ENCODE measurements at regions of chr5 and their contacts with region 1.

Region 1: DNA sequence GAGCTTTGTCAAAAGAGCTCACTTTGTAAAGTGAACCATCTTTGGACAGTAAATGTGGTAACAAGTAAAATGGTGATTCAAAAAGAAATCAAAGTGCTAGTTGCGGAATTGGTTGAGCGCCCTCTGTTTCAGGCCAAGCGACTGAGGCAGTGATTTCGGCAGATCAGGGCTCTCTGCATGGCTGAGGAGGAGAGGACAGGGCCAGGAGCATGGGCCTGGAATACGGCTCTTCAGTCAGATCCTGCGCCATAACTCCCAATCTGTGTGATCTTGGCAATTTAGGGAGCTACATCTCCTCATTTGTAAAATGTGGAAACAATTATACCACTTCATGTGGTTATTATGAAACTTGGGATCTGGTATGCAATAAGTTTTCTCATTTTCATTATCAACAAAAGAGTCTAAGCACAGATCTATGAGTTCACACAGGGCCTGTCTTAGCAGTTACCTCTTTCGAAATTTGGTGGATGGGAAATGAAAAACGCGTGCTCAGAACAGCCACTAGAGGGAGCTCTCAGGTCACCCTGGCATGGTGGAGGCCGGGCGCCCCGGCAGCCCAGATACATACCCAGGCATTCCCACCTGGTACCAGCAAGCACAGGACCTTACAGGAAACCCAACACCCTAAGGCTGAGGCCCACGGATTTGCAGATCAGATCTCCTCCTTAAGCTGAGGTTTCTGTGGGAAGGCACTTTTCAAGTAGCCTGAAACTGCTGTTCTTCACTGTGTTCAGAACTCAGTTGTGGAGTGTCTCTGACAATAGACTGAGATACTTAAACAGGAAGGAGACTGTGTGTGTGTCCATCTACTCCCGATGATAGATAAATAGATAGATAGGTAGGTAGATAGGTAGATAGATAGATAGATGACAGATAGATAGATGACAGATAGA is 303.7 kb downstream of the RAB3C start:
- DNase-seq: peak; percentile 77
- ATAC-seq: peak; percentile 87
- H3K4me3 Mint-ChIP-seq: no peak overlapping the region
- H3K27ac Mint-ChIP-seq: peak overlapping the region; percentile 67
- H3K4me1 Mint-ChIP-seq: peaks cover 39% of the 10 kb centered on the region
- H3K27me3 Mint-ChIP-seq: peaks cover 15% of the 10 kb centered on the region

Region 2: GRCh38 chr5:57929271-57929670 is 957.3 kb before region 1 on chr5:
- CTCF ChIA-PET with region 1: no interaction called
- DNase-seq: no peak
- ATAC-seq: no peak
- H3K4me3 Mint-ChIP-seq: no peak overlapping the region
- H3K27ac Mint-ChIP-seq: no peak overlapping the region
- H3K4me1 Mint-ChIP-seq: no peaks in the 10 kb centered on the region
- H3K27me3 Mint-ChIP-seq: no peaks in the 10 kb centered on the region

Region 3: DNA sequence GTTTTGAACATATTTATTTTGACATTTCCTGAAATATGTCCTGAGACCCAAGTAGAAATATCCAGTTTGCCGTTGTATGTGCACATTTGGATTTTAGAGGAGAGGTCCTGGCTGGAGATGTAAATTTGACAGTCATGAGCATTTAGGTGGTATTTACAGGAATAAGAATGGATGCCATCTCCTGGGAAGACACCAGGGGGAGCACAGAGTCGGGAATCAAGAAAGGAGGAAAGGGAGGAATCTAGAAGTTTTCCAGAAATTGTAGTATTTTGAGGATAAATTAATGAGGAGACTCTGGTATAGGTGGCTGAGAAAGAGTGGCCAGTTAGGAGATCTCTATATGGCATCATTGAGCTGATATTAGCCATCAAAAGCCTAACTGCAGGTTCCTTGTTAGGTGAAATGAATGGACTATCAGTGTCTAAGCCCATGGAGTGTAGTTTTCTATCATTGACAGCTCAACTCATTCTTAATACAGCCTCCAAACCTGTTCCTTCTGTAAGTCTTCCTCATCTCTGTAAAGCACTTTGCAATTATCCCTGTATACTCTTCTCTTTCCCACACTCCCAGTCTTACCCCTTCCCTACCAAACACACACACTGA is 388.1 kb before region 1 on chr5:
- CTCF ChIA-PET with region 1: no interaction called
- DNase-seq: no peak
- ATAC-seq: no peak
- H3K4me3 Mint-ChIP-seq: no peak overlapping the region
- H3K27ac Mint-ChIP-seq: no peak overlapping the region
- H3K4me1 Mint-ChIP-seq: no peaks in the 10 kb centered on the region
- H3K27me3 Mint-ChIP-seq: peaks cover 9% of the 10 kb centered on the region

Region 4: GRCh38 chr5:58922461-58923171 is 36.1 kb after region 1 on chr5:
- CTCF ChIA-PET with region 1: no interaction called
- DNase-seq: no peak
- ATAC-seq: no peak
- H3K4me3 Mint-ChIP-seq: no peak overlapping the region
- H3K27ac Mint-ChIP-seq: no peak overlapping the region
- H3K4me1 Mint-ChIP-seq: peaks cover 23% of the 10 kb centered on the region
- H3K27me3 Mint-ChIP-seq: peaks cover 18% of the 10 kb centered on the region

Region 5: DNA sequence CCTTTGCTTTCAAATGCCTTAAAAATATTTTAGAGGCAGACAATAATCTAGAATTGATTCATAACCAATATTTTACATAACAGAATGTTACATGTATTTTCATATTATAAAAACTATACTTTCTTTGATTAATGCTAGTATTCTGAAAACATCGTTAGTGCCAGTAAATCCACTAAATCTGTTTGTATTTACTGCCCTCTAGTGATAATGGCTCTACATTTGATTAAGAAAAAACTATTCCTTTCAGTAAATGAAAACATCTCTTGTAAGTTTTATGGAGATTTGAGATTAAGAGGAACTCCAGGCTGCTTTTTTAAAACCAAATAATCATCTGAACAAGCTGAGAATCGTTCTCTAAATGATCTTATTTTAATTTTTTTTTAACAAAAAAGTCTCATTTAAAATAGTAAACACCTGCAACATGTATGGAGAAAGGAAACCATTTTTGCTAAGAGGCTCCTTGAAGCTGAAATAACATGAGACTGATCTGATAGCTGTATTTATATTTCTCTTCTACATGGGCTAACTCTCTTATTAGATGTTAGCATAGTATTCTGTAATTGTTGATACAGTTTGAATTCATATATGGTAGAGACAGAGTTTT is 121.0 kb after region 1 on chr5:
- CTCF ChIA-PET with region 1: interaction called, 17 read pairs
- DNase-seq: no peak
- ATAC-seq: no peak
- H3K4me3 Mint-ChIP-seq: no peak overlapping the region
- H3K27ac Mint-ChIP-seq: no peak overlapping the region
- H3K4me1 Mint-ChIP-seq: peaks cover 46% of the 10 kb centered on the region
- H3K27me3 Mint-ChIP-seq: no peaks in the 10 kb centered on the region

Region 6: DNA sequence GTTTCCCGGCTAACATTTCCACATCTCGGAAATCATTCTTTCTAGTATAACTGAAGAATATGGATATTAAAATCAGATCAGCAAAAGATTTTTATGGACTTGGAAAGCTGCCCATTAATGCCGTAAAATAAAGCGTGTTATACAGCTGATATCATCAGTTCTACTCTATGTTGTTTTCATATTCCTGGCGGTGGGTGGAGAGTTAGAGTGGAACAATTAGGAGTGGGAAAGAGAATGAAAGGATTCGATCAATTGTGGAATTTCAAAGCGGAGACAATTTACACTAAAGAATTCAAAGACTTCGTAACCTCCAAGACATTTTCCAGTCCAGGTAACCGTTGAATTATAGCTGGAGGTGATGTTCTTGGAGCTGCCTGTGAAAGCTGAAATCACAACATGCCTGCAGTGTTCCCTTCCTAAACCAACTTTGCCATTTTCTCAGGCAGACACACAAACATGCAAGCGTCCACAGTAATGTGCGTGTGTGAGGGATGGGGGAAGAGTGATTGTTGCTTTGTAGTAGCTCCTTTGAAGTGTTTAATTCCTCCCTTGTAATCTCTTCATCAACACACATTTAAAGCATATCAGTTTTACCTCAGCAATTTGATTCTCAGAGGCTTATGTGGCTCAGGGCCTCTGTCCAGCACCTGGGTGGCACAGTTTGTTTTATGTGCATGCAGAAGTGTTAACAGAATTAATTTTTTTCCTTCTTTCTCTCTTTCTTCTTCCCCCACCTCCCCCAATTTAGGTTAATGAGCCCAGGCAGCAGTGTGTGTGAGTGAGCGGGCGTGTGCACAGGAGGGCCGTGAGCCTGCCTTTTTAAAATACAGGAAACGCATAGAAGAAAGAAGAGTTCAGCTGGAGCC is 240.4 kb after region 1 on chr5:
- CTCF ChIA-PET with region 1: interaction called, 12 read pairs
- DNase-seq: no peak
- ATAC-seq: peak; percentile 6
- H3K4me3 Mint-ChIP-seq: no peak overlapping the region
- H3K27ac Mint-ChIP-seq: no peak overlapping the region
- H3K4me1 Mint-ChIP-seq: peaks cover 13% of the 10 kb centered on the region
- H3K27me3 Mint-ChIP-seq: no peaks in the 10 kb centered on the region

Region 7: DNA sequence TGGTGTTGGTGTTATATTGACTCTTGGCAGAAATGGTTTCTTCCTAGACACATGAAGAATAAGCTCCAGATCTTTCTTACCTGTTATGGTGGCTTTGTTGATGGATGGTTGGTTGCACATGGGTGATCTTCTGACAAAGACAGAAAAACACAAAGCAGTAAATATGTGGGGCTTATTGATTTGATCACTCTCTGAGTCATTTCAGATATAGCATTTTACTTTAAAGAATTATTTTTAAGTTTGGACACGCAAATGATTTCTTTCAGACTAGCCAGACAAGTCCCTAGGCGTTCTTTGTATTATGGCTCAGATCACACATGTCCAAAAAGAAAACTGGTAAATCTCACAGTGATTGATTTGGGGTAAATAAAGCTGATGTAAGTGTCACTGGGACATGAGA is 294.0 kb after region 1 on chr5:
- CTCF ChIA-PET with region 1: interaction called, 49 read pairs
- DNase-seq: no peak
- ATAC-seq: no peak
- H3K4me3 Mint-ChIP-seq: no peak overlapping the region
- H3K27ac Mint-ChIP-seq: no peak overlapping the region
- H3K4me1 Mint-ChIP-seq: peaks cover 24% of the 10 kb centered on the region
- H3K27me3 Mint-ChIP-seq: peaks cover 21% of the 10 kb centered on the region

Region 8: DNA sequence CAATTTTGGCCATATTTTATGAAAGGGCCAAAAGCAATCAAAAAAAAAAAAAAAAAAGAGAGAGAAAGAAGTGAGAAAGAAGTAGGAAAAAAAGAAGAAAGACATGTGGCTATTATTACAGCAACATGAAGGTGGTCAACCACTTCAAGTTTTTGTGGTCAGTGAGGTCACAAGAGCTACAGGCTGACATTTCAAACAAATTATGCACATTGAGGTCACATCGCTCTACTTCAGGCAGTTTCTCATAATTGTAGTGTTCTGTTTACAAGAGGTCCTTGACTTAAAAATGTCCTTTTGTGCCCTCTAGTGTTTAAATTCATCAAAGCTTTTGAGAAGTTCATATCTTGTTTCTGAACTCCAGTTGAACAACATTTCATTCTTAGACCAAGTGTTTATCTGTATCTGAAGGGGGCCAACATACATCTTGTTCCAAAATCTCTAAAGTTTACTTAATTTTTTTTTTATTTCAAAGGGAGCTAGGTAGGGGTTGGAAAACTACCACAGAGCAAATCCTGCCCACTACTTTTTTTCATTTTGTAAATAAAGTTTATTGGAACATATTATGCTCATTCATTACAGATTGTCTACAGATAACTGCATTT is 493.9 kb after region 1 on chr5:
- CTCF ChIA-PET with region 1: interaction called, 10 read pairs
- DNase-seq: peak; percentile 73
- ATAC-seq: peak; percentile 96
- H3K4me3 Mint-ChIP-seq: no peak overlapping the region
- H3K27ac Mint-ChIP-seq: peak overlapping the region; percentile 16
- H3K4me1 Mint-ChIP-seq: peaks cover 5% of the 10 kb centered on the region
- H3K27me3 Mint-ChIP-seq: peaks cover 19% of the 10 kb centered on the region

Measured in activated CD8-positive, alpha-beta memory T cell treated with anti-CD3 and anti-CD28 coated beads, Interleukin-2, amount 10 ng/mL, durations not matched to agents 7 days and 5 days (primary cell).